Lower lobe of right lung (tissue), 2 donors: ENCODE measurements at regions of chr20 and their contacts with region 1.

Region 1: GRCh38 chr20:44217342-44218092 is 6.9 kb upstream of the OSER1 start:
- DNase-seq: peak; percentile 79
- ATAC-seq: peak; percentile 90 to 93
- H3K4me3 ChIP-seq: peak overlapping the region; percentile 28
- H3K27ac ChIP-seq: peak overlapping the region; percentile 16
- H3K4me1 ChIP-seq: peaks cover 12% of the 10 kb centered on the region
- H3K27me3 ChIP-seq: no peaks in the 10 kb centered on the region
- CTCF ChIP-seq: peak; percentile 87

Region 2: DNA sequence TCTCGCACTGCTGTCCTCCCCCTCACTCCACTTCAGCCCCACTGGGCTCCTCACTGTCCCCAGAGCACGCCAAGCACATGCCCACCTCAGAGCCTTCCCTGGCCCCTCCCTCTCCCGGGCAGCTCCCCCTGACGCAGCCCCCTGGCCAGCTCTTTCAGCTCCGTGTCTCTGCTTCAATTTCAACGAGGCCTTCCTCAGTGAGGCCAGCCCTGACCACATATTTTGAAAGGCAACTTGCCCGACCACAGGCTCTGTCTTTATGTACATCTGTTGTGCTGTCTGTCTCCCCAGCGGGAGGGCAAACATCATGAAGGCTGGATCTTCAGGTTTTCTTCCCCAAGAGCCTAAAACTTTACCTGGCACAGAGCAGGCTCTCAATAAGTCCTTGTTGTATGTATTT is 75.1 kb before region 1 on chr20:
- intact Hi-C with region 1: no loop called
- DNase-seq: no peak
- ATAC-seq: no peak
- H3K4me3 ChIP-seq: no peak overlapping the region
- H3K27ac ChIP-seq: no peak overlapping the region
- H3K4me1 ChIP-seq: peaks cover under 1% of the 10 kb centered on the region
- H3K27me3 ChIP-seq: peaks cover 8% of the 10 kb centered on the region
- CTCF ChIP-seq: no peak

Region 3: DNA sequence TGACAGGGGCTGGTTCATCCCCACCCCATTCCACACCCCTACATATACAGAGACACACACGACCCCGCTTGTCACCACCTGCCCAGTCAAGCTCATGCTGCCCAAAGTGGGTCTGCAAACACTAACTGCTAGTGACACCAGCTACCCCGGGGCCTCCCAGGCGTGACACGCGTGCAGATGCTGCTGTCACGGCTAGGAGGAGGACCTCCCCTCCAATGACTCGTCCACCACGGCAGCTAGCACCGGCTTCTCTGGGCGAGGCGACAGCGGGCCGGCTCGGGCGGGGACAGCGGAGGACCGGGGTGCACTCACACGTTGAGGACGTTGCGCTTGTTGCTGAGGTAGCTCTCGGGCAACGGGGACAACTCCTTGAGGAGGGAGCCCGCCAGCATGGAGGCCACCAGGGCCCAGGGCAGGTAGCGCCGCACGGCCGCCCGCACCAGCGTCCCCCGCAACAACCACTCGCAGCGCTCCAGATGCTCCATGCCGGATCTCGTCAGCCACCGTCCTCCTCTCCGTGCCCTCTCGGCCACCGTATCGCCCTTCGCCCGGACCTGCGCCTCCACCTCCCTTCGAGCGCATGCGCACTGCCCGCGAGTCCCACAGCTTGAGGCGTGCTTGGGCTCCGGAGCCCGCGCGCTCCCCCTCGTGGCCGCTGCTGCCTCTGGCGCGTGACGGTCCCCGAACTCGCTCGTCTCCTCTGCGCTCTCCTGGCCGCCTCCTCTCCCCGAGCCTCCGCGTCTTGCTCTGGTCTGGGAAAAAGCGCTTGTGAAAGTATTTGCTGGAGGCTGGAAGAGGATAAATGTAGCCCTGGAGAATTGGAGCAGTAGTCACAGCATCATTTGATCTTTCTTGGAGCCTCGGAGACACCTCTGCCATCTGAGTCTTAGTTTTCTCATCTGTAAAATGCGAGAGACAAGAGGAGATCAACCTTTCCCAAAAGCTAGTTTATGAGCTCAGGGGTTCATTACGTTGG is 93.4 kb after region 1 on chr20 and contains the start of gene FITM2:
- intact Hi-C with region 1: loop called (anchors 5 kb)
- DNase-seq: peak; percentile 99
- ATAC-seq: peak; percentile 98 to 99
- H3K4me3 ChIP-seq: peak within 1 kb of the TSS; percentile 99
- H3K27ac ChIP-seq: peak within 1 kb of the TSS; percentile 80
- H3K4me1 ChIP-seq: peaks cover 13% of the 10 kb centered on the region
- H3K27me3 ChIP-seq: peaks cover 3% of the 10 kb centered on the region
- CTCF ChIP-seq: peak; percentile 95
- total RNA-seq, gene FITM2: 9.3 TPM